Breast epithelium (tissue), 4 donors: ENCODE measurements at regions of chr3 and their contacts with region 1.

Region 1: GRCh38 chr3:196920733-196921132 is 21.6 kb downstream of the NCBP2 start:
- DNase-seq: no peak
- H3K4me3 ChIP-seq: no peak overlapping the region
- H3K27ac ChIP-seq: no peak overlapping the region
- H3K4me1 ChIP-seq: no peaks in the 10 kb centered on the region
- H3K27me3 ChIP-seq: no peaks in the 10 kb centered on the region
- CTCF ChIP-seq: no peak
- POLR2A ChIP-seq: no peak

Region 2: DNA sequence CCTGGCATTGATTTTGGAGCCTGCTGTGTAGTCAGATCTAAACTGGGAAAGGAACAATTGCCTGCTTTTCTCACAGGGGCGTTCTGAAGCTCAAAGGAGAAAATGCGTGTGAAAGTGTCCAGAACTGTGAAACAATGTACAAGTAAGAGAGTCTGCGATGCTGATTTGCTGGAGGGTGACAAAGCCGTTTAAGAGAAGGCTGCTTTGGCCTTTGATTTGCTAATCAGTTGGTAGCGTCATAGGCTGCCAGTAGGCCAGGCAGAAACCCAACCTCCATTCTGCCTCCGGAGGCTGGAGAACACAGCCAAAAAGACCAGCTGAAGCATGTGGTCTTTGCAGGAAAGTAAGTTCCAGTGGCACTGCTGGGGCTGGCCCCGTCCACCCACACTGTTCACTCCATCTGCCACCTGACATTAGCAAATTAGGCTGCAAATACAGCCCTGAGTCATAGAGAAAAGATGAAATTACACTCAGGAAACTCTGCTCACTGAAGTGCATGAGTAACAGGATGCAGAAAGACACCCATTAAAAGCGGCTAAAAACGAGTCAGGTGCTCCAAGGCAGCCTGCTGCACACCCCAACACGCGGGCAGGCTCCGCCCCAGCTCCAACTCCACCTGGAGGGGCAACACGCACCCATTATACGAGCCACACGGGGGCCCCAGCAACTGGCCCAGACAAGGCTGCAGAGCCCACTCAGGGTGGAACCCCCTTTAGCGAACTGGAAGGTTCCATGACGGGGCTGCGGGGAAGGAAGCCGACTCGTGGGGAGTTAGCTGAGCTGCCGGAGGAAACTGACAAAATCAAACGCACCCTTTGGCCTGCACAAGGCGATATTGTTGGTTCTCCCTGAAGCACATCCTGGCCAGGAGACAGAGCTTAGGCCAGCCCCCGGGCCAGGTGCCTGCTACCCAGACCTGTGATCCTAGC is 741.1 kb before region 1 on chr3:
- intact Hi-C with region 1: loop called (anchors 5 kb)
- DNase-seq: no peak
- H3K4me3 ChIP-seq: peak overlapping the region in 2 of 3 donors; percentile 13 to 31
- H3K27ac ChIP-seq: peak overlapping the region in 1 of 2 donors; percentile 14
- H3K4me1 ChIP-seq: no peaks in the 10 kb centered on the region
- H3K27me3 ChIP-seq: no peaks in the 10 kb centered on the region
- CTCF ChIP-seq: no peak
- POLR2A ChIP-seq: no peak